Activated T-helper 1 cell treated with anti-CD3 and anti-CD28 coated beads, Interleukin-12 subunit alpha, Interleukin-12 subunit beta, Interleukin-2, Interleukin-4 antibody, amounts not matched to agents 30 ng/mL and 10 ng/mL and 1 ng/mL, durations not matched to agents 14 hours and 24 hours and 36 hours (primary cell): ENCODE measurements at regions of chr1 and their contacts with region 1.

Region 1: DNA sequence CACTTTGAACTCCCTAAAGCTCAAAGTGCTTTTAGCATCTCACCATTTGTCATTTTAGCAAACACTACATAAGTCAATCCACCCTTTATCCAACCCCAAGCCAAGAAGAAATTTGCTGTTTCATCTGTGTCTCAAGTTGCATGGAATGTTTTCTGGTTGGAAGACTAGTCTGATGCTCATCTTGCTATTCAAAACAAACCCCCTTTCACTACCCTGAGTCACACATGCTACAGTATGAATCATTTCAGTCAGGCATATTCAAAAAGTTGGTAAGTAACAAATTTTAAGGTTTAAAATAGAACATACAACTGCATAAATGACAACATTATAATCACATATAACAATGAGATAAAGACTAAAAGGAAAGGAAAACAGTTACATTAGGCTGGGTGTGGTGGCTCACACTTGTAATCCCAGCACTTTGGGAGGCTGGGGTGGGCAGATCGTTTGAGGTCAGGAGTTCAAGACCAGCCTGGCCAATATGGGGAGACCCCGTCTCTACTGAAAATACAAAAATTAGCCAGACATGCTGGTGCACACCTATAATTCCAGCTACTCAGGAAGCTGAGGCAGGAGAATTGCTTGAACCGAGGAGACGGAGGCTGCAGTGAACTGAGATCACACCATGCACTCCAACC is 38.7 kb downstream of the DSTYK start:
- DNase-seq: no peak
- H3K4me3 Mint-ChIP-seq: peak overlapping the region; percentile 45
- H3K27ac Mint-ChIP-seq: peak overlapping the region; percentile 81
- H3K4me1 Mint-ChIP-seq: peaks cover 37% of the 10 kb centered on the region
- H3K27me3 Mint-ChIP-seq: no peaks in the 10 kb centered on the region

Region 2: GRCh38 chr1:204961765-204962419 is 211.0 kb before region 1 on chr1:
- intact Hi-C with region 1: no loop called
- DNase-seq: no peak
- H3K4me3 Mint-ChIP-seq: no peak overlapping the region
- H3K27ac Mint-ChIP-seq: no peak overlapping the region
- H3K4me1 Mint-ChIP-seq: no peaks in the 10 kb centered on the region
- H3K27me3 Mint-ChIP-seq: peaks cover 23% of the 10 kb centered on the region

Region 3: GRCh38 chr1:205211169-205211838 is 38.5 kb after region 1 on chr1 and contains the start of gene DSTYK:
- intact Hi-C with region 1: loop called (anchors 2 kb)
- DNase-seq: peak; percentile 89
- H3K4me3 Mint-ChIP-seq: peak within 1 kb of the TSS; percentile 99
- H3K27ac Mint-ChIP-seq: peak within 1 kb of the TSS; percentile 94
- H3K4me1 Mint-ChIP-seq: peaks cover 49% of the 10 kb centered on the region
- H3K27me3 Mint-ChIP-seq: no peaks in the 10 kb centered on the region
- total RNA-seq, gene DSTYK: 34.2 and 35.9 TPM in 2 replicates